ENCODE measurements at regions of chr16 and their contacts with region 1.

Region 1: GRCh38 chr16:67017810-67018488 is 11.0 kb upstream of the CBFB start:
- DNase-seq: peak; percentile 93 to 97
- ATAC-seq: peak; percentile 89 to 98
- H3K4me3 ChIP-seq: no peak overlapping the region
- H3K27ac ChIP-seq: peak overlapping the region in 1 of 2 experiments; percentile 49; a peak in 2 of 6 replicates
- H3K4me1 ChIP-seq: peaks cover 3% of the 10 kb centered on the region; the same call in 2 of the 3 replicates
- CTCF ChIP-seq: peak; percentile 84
- EP300 ChIP-seq: no peak
- POLR2A ChIP-seq: no peak
- RAD21 ChIP-seq: peak; percentile 84 to 92

Region 2: GRCh38 chr16:66858740-66859396 is 159.1 kb before region 1 on chr16:
- CTCF ChIA-PET with region 1: no interaction called
- POLR2A ChIA-PET with region 1: no interaction called
- DNase-seq: peak in 1 of 2 experiments; percentile 47
- ATAC-seq: peak; percentile 70 to 78
- H3K4me3 ChIP-seq: no peak overlapping the region
- H3K27ac ChIP-seq: peak overlapping the region in 1 of 2 experiments; percentile 25; a peak in 1 of 6 replicates
- H3K4me1 ChIP-seq: peaks cover 9% of the 10 kb centered on the region; the same call in 1 of the 3 replicates
- CTCF ChIP-seq: no peak
- EP300 ChIP-seq: no peak
- POLR2A ChIP-seq: no peak
- RAD21 ChIP-seq: no peak

Region 3: GRCh38 chr16:66988197-66988788 is 29.7 kb before region 1 on chr16 and contains the start of gene CES4A:
- CTCF ChIA-PET with region 1: interaction called, 10 read pairs
- POLR2A ChIA-PET with region 1: no interaction called
- DNase-seq: no peak
- ATAC-seq: peak; percentile 57 to 60; a peak in 5 of 6 replicates
- H3K4me3 ChIP-seq: no peak within 1 kb of the TSS
- H3K27ac ChIP-seq: peak within 1 kb of the TSS; percentile 38 to 44; a peak in 2 of 6 replicates
- H3K4me1 ChIP-seq: peaks cover 4% of the 10 kb centered on the region; the same call in 1 of the 3 replicates
- CTCF ChIP-seq: no peak
- EP300 ChIP-seq: no peak
- POLR2A ChIP-seq: no peak
- RAD21 ChIP-seq: no peak
- polyA plus RNA-seq, gene CES4A: 3.5 and 4.4 TPM in 2 replicates

Region 4: DNA sequence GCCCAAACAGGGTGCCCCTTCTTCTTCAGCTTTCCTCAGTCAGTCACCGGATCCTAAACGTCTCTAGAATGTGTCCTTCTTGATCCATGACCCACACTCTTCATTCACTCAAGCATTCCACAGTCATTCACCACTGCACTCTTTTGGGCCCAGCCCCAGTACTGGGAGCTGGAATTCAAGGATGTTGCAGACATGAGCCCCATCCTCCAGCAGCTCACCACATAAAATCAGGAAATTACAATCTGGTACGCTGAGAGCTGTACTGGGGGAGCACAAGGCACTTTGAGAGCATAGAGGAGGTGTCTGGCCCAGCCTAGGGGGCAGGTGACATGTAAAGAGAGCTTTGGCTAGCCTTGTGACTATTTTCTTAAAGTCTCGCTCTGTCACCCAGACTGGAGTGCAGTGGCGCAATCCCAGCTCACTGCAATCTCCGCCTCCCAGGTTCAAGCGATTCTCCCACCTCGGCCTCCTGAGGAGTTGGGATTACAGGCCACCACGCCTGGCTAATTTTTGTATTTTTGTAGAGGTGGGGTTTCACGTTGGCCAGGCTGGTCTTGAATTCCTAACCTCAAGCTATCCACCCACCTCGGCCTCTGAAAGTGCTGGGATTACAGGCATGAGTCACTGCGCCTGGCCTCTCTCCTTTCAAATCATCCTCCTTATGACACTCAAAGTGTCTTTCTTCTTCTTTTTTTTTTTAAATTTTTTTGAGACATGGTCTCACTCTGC is 10.9 kb before region 1 on chr16:
- CTCF ChIA-PET with region 1: interaction called, 14 read pairs
- POLR2A ChIA-PET with region 1: no interaction called
- DNase-seq: no peak
- ATAC-seq: no peak
- H3K4me3 ChIP-seq: no peak overlapping the region
- H3K27ac ChIP-seq: peak overlapping the region; percentile 38; a peak in 1 of 6 replicates
- H3K4me1 ChIP-seq: peaks cover 9% of the 10 kb centered on the region; the same call in 2 of the 3 replicates
- CTCF ChIP-seq: no peak
- EP300 ChIP-seq: no peak
- POLR2A ChIP-seq: no peak
- RAD21 ChIP-seq: no peak

Region 5: DNA sequence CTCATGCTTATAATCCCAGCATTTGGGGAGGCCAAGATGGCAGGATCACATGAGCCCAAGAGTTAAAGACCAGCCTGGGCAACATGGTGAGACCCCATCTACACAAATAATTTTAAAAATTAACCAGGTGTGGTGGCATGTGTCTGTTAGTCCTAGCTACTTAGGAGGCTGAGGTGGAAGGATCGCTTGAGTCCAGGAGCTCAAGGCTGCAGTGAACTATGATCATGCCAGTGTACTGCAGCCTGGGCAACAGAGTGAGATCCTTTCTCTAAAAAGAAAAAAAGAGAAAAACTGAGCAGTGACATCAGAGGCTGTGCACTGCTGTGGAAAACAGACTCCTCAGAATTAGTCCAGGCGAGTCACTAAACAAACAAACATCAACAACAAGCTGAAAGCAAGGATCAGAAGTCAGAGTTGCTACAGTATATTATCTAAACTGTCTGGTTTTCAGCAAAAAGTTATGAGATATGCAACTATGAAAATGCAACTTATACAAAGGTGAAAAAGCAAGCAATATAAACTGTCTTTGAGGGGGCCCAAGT is 50.3 kb after region 1 on chr16:
- CTCF ChIA-PET with region 1: interaction called, 13 read pairs
- POLR2A ChIA-PET with region 1: no interaction called
- DNase-seq: peak in 1 of 2 experiments; percentile 10
- ATAC-seq: peak in 1 of 2 experiments; percentile 35; a peak in 1 of 6 replicates
- H3K4me3 ChIP-seq: no peak overlapping the region
- H3K27ac ChIP-seq: no peak overlapping the region
- H3K4me1 ChIP-seq: 0 out of 3 replicates have a peak, but pooled peaks cover 9% of the 10 kb centered on the region
- CTCF ChIP-seq: no peak
- EP300 ChIP-seq: no peak
- POLR2A ChIP-seq: no peak
- RAD21 ChIP-seq: no peak

Region 6: GRCh38 chr16:67183627-67184328 is 165.8 kb after region 1 on chr16 and contains the start of gene MATCAP1:
- CTCF ChIA-PET with region 1: interaction called, 24 read pairs
- POLR2A ChIA-PET with region 1: interaction called, 4 read pairs
- DNase-seq: peak; percentile 98 to 99
- ATAC-seq: peak; percentile 72 to 87
- H3K4me3 ChIP-seq: peak within 1 kb of the TSS; percentile 66
- H3K27ac ChIP-seq: peak within 1 kb of the TSS; percentile 93 to 97
- H3K4me1 ChIP-seq: peaks cover 34% of the 10 kb centered on the region
- CTCF ChIP-seq: no peak
- EP300 ChIP-seq: no peak
- POLR2A ChIP-seq: peak; percentile 45
- RAD21 ChIP-seq: no peak
- polyA plus RNA-seq, gene MATCAP1: 7.2 and 7.5 TPM in 2 replicates

Region 7: DNA sequence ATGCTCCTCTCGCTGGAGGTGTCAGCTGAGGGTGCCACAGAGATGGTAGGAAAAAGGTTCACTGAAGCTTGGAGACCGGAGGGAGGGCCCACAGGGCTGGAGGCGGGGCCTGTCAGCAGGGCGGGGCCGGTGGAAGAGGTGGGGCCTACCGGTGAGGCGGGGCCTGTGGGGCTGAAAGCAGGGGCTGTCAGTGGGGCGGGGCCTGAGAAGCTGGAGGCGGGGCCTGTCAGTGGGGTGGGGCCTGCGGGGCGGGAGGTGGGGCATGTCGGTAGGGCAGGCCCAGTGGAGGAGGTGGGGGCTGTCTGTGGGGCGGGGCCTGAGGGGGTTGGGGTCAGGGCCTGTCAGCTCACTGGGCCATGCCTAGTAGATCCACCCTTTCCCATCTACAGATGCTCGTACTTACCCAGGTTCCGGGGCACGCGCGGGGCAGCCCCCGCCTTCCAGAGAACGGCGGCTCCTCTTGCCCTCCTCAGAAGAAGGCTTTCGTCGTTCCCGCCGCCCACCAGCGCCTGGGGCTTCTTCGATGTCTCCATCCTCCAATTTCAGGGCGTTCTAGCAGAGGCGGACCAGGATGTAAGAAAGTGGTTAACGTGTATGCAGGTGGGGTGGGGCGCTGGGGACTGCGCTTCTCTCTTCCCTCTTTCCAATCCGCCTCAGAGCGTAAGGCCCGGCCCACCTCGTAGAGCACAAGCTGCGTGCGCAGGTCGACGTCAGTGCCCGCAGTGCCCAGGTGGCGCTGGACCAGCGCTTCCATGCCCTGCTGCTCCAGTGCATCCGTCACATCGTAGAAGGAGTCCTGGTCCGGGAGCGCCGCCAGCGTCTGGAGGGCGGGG is 218.8 kb after region 1 on chr16:
- CTCF ChIA-PET with region 1: no interaction called
- POLR2A ChIA-PET with region 1: no interaction called
- DNase-seq: peak; percentile 75 to 86
- ATAC-seq: peak; percentile 37 to 77
- H3K4me3 ChIP-seq: no peak overlapping the region
- H3K27ac ChIP-seq: no peak overlapping the region; a peak in 1 of 6 replicates
- H3K4me1 ChIP-seq: peaks cover 21% of the 10 kb centered on the region
- CTCF ChIP-seq: no peak
- EP300 ChIP-seq: no peak
- POLR2A ChIP-seq: no peak
- RAD21 ChIP-seq: no peak

Region 8: DNA sequence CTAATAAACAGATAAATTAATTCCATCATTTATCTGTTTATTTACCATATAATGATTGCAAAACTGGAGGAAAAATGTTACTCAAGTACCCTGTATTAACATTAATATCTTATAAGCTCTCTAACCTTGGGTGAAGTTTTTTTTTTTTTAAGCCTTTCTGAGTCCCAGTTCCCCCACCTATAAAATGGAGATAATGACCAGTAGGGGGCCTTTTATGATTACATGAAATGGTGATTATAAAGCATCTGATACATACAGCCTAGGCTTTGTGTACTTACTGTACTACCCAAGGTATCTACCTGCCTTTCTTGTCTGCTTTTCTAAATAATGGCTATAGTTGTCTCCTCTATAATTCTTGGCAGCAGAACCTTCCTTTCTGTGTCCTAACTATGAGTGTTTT is 331.2 kb after region 1 on chr16:
- CTCF ChIA-PET with region 1: no interaction called
- POLR2A ChIA-PET with region 1: no interaction called
- DNase-seq: peak in 1 of 2 experiments; percentile 41
- ATAC-seq: peak; percentile 62 to 88; a peak in 3 of 6 replicates
- H3K4me3 ChIP-seq: no peak overlapping the region
- H3K27ac ChIP-seq: no peak overlapping the region
- H3K4me1 ChIP-seq: peaks cover 20% of the 10 kb centered on the region
- CTCF ChIP-seq: peak; percentile 54
- EP300 ChIP-seq: no peak
- POLR2A ChIP-seq: no peak
- RAD21 ChIP-seq: peak; percentile 27 to 35; a peak in 2 of 5 replicates

Measured in A549 (cell line).